Cardiac septum (tissue), 1 donor: ENCODE measurements at regions of chr1 and their contacts with region 1.

Region 1: DNA sequence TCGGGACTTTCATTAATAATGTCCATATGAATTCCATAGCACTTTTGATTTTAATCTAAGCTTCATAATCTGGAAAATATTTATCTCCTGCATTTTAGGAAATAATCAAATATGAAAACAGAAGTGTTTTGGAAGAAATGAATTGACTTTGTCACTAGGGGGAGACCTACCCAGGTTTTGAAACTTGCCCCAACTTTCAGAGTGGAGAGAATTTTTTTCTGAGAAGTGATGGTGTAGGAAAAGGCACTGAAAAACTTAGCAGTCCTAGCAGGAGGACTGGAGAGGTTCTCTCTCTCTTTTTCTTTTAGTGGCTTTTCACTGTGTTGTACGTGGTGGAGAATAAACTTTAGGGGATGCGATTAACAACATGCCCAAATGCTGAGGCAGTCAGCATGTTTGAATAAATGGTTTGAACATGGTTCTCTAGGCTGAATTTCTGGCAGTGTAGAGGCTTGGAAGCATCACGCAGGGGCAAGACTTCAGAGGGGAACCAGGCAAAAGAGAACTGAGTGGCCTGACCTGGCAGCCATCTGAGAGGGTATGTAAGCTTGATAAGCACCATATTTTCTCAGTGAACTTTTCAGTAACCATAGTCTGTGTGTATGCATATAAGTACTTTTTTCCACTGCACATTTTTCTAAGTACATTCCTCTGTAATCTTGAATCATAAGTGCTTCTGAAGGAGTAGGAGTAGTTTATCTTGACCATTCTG is 68.3 kb upstream of the NEK7 start:
- DNase-seq: no peak

Region 2: DNA sequence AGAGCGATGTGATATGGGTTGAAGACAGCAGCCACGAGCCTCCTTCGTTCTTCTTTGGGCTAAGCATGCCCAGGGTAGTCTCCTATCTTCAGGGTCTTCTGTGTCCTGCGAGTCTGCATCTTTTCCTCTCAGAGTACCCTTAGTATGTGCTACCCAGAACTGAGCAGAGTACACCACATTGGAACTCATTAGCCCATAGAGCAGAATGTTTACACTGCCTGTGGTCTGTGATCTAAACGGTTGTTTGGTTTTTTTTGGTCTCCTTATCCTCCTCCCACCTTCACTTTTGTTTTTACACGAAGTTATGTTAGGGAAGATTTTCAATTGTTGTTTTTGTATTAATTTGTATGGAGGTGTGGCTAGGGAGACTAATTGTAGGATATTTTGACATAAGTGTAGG is 194.7 kb after region 1 on chr1:
- intact Hi-C with region 1: loop called (anchors 10 kb)
- DNase-seq: no peak

Region 3: GRCh38 chr1:198359024-198359653 is 270.6 kb after region 1 on chr1:
- intact Hi-C with region 1: loop called (anchors 5 kb)
- DNase-seq: no peak